Transverse colon (tissue), 4 donors: ENCODE measurements at regions of chr6 and their contacts with region 1.

Region 1: GRCh38 chr6:166488076-166488685 is 98.3 kb downstream of the RAMACL start:
- DNase-seq: peak; percentile 57
- H3K4me3 ChIP-seq: no peak overlapping the region
- H3K27ac ChIP-seq: peak overlapping the region; percentile 50 to 71 (median 58)
- H3K4me1 ChIP-seq: peaks cover 0 to 14% (median 0%) of the 10 kb centered on the region in 4 donors
- H3K27me3 ChIP-seq: no peaks in the 10 kb centered on the region
- CTCF ChIP-seq: no peak
- EP300 ChIP-seq: no peak
- POLR2A ChIP-seq: peak; percentile 36

Region 2: DNA sequence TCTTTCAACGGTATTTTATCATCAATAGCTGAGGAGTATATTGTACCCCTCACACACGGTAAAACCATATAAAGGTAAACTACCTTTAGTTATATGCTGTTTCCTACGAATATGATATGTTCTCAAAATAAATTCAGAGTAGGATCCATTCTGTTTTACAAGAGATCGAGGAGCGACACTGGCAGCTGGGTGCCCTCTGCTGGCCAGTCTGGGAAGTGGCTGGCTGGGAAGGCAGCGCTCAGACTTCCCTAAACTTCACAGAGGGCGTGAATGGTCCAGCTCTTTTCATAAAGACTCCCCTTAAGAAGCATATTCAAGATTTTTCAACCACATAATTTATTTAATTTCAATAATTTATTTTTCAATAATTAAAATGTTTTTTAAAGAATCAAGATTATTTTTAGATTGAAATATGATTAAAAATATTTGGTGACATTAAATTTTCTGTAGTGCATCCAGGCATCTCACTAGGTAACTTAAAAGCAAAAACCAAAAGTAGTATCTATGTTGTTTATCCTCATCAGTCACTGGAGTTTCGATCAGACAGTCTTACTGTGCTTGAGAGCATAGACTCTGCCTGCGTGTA is 637.7 kb before region 1 on chr6:
- in situ Hi-C with region 1: no loop called
- intact Hi-C with region 1: no loop called
- DNase-seq: peak; percentile 76
- H3K4me3 ChIP-seq: no peak overlapping the region
- H3K27ac ChIP-seq: no peak overlapping the region
- H3K4me1 ChIP-seq: peaks cover 3 to 25% (median 17%) of the 10 kb centered on the region in 4 donors
- H3K27me3 ChIP-seq: peaks cover 33% of the 10 kb centered on the region
- CTCF ChIP-seq: peak; percentile 90 to 99 (median 97)
- EP300 ChIP-seq: no peak
- POLR2A ChIP-seq: no peak

Region 3: DNA sequence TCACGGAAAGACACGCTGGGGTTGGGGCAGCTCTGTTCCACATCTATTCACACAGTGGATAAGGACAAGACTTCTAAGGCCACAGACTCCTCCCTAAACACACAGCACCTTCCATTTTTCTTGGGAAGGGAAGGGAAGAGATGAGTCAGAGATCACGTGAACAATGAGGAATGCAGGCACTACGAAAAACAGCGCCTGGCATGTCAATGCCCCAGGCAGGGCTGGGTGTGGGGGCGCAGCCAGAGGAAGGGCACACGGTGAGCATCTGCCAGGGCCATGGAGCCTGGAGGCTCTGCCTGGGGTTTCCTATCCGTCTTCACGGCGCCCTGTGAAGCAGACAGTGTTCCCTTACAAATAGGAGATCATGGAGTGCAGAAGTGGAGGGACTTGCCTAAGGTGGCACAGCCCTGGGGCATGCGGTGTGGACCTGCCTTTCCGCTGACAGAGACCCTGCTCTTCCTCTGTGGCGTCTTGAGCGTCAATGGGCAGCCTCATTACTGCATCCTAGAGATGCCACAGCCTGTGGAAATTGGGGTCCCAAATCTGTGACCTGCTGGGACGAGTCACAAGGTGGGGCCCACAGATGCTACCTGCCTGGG is 818.3 kb after region 1 on chr6:
- in situ Hi-C with region 1: no loop called
- intact Hi-C with region 1: loop called (anchors 10 kb)
- DNase-seq: no peak
- H3K4me3 ChIP-seq: no peak overlapping the region
- H3K27ac ChIP-seq: no peak overlapping the region
- H3K4me1 ChIP-seq: no peaks in the 10 kb centered on the region
- H3K27me3 ChIP-seq: no peaks in the 10 kb centered on the region
- CTCF ChIP-seq: no peak
- EP300 ChIP-seq: no peak
- POLR2A ChIP-seq: no peak